ENCODE measurements at regions of chr5 and their contacts with region 1.

Region 1: GRCh38 chr5:73312146-73312871 is 136.3 kb downstream of the FOXD1 start:
- DNase-seq: no peak

Region 2: GRCh38 chr5:72767289-72767998 is 544.9 kb before region 1 on chr5:
- in situ Hi-C with region 1: no loop called
- DNase-seq: no peak

Region 3: GRCh38 chr5:73236541-73237128 is 75.7 kb before region 1 on chr5:
- in situ Hi-C with region 1: loop called (anchors 5 kb)
- DNase-seq: no peak